Activated CD4-positive, alpha-beta T cell treated with anti-CD3 and anti-CD28 coated beads, Interleukin-2, amount 10 ng/mL, durations not matched to agents 24 days and 14 days (primary cell): ENCODE measurements at regions of chr2 and their contacts with region 1.

Region 1: DNA sequence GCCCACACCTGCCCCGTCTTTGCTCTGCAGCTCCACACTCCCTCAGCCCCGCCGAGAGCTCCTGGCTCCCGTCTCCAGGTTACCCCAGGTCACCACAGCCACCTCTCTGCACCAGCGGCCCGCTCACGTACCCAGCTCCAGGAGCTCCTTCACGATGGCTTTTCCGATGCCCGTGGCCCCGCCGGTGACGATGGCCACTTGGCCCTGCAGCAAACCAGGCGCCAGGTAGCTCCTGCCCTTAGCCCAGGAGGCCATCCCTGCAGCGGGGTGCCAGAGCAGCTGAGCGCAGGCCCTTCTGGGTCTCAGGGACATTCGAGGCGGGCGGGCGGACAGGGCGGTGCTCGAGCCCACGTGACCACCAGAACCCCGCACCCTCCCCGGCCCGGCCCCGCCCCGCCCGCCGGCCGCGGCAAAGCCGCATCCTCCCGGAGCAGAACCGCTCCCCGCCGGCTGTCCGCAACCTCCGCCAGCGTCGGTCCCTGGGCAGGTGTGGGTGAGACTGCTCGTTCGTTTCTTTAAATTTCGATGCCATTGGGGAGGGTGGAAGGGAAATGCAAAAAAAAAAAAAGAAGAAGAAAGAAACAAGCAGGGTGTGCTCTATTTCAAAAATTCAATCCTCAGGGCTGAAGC is at the starts of genes PECR and TMEM169:
- DNase-seq: peak; percentile 93
- H3K4me3 Mint-ChIP-seq: peak within 1 kb of the TSS; percentile 90
- H3K27ac Mint-ChIP-seq: peak within 1 kb of the TSS; percentile 78
- H3K4me1 Mint-ChIP-seq: peaks cover 52% of the 10 kb centered on the region
- H3K27me3 Mint-ChIP-seq: no peaks in the 10 kb centered on the region
- total RNA-seq, gene PECR: 13.1 and 15.3 TPM in 2 replicates
- total RNA-seq, gene TMEM169: 0.51 and 0.97 TPM in 2 replicates

Region 2: GRCh38 chr2:215311625-215312396 is 769.8 kb before region 1 on chr2 and contains the start of gene ATIC:
- intact Hi-C with region 1: loop called (anchors 10 kb)
- DNase-seq: peak; percentile 98
- H3K4me3 Mint-ChIP-seq: peak within 1 kb of the TSS; percentile 95
- H3K27ac Mint-ChIP-seq: peak within 1 kb of the TSS; percentile 95
- H3K4me1 Mint-ChIP-seq: peaks cover 31% of the 10 kb centered on the region
- H3K27me3 Mint-ChIP-seq: peaks cover 4% of the 10 kb centered on the region
- total RNA-seq, gene ATIC: 316 and 322 TPM in 2 replicates

Region 3: DNA sequence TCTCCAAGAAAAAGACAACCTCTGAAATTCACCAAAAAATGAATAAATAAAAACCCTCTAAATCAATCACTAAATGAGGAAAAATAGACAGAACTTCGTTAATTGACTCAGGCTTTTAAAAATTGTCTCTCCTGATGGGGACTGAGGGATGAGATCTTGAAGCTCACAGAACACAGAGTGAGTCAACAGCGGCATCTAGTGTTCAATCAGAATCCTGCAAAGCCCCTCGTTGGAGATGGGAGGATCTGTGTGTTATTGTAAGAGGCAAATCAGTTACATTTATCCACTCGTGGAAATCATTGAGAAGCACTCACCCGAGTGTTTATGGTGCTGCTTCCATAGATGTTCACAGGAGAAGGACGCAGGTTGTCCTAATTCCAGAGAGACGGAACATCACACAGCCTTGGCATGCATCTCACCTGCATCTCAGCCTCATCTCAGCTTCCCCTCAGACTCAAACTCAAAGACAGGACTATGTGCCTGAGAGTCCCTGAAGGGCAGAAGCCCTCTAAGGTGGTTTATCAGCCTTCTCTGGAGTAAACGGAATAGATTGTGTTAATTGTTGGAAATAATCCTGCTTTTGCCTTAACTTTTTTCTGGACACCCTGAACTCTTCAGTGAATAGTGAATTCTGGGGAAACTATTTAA is 150.2 kb before region 1 on chr2:
- intact Hi-C with region 1: no loop called
- DNase-seq: peak; percentile 86
- H3K4me3 Mint-ChIP-seq: no peak overlapping the region
- H3K27ac Mint-ChIP-seq: no peak overlapping the region
- H3K4me1 Mint-ChIP-seq: peaks cover 6% of the 10 kb centered on the region
- H3K27me3 Mint-ChIP-seq: peaks cover 2% of the 10 kb centered on the region

Region 4: GRCh38 chr2:216013080-216013909 is 68.3 kb before region 1 on chr2 and contains the start of gene MREG:
- intact Hi-C with region 1: no loop called
- DNase-seq: peak; percentile 95
- H3K4me3 Mint-ChIP-seq: peak within 1 kb of the TSS; percentile 90
- H3K27ac Mint-ChIP-seq: peak within 1 kb of the TSS; percentile 71
- H3K4me1 Mint-ChIP-seq: peaks cover 47% of the 10 kb centered on the region
- H3K27me3 Mint-ChIP-seq: peaks cover 3% of the 10 kb centered on the region
- total RNA-seq, gene MREG: 10.6 and 10.9 TPM in 2 replicates

Region 5: GRCh38 chr2:216057688-216058193 is 23.9 kb before region 1 on chr2:
- intact Hi-C with region 1: loop called (anchors 2 kb)
- DNase-seq: peak; percentile 90
- H3K4me3 Mint-ChIP-seq: peak overlapping the region; percentile 81
- H3K27ac Mint-ChIP-seq: peak overlapping the region; percentile 92
- H3K4me1 Mint-ChIP-seq: peaks cover 32% of the 10 kb centered on the region
- H3K27me3 Mint-ChIP-seq: no peaks in the 10 kb centered on the region

Region 6: GRCh38 chr2:216071111-216071851 is 10.3 kb before region 1 on chr2:
- intact Hi-C with region 1: loop called (anchors 1 kb)
- DNase-seq: no peak
- H3K4me3 Mint-ChIP-seq: no peak overlapping the region
- H3K27ac Mint-ChIP-seq: no peak overlapping the region
- H3K4me1 Mint-ChIP-seq: peaks cover 26% of the 10 kb centered on the region
- H3K27me3 Mint-ChIP-seq: no peaks in the 10 kb centered on the region

Region 7: DNA sequence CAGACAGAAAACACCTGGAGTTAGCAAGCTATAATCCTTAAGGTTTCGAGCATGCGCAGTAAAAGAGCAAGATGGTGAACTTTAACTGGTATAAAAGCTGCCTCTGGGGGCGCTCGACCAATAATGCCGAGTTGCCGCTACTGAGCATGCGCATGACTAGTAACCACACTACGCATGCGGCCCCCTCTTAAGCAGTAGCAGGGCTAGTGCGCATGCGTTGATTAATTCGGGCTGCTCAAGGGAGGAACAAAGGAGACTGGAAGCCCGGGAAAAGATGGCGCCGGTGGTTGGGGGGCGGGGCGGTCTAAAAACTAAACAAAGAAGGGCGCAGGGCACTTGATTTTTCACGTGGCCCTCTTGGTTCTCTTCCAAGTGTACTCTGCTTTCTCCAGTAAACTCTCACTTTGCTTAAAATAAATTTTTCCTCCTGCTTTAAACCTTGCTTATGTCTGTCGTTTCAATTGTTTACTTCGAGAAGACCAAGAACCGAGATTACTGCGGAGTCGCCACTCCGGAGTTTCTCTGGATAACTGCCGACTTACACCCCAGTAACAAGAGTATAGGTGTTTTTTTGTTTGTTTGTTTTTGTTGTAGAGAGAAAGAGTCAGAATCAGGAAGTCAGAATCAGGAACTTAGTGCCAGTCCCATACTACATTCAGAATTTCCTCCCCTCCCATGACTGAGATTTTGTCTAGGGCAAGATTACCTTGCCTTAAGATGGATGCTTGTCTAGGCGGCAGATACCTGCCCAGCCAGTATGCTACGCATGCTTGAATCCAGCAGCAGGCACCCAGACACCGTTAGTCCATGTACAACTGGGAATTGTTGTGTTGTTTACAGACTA is 33.3 kb after region 1 on chr2:
- intact Hi-C with region 1: loop called (anchors 1 kb)
- DNase-seq: peak; percentile 99
- H3K4me3 Mint-ChIP-seq: peak overlapping the region; percentile 91
- H3K27ac Mint-ChIP-seq: peak overlapping the region; percentile 92
- H3K4me1 Mint-ChIP-seq: peaks cover 79% of the 10 kb centered on the region
- H3K27me3 Mint-ChIP-seq: peaks cover 2% of the 10 kb centered on the region

Region 8: DNA sequence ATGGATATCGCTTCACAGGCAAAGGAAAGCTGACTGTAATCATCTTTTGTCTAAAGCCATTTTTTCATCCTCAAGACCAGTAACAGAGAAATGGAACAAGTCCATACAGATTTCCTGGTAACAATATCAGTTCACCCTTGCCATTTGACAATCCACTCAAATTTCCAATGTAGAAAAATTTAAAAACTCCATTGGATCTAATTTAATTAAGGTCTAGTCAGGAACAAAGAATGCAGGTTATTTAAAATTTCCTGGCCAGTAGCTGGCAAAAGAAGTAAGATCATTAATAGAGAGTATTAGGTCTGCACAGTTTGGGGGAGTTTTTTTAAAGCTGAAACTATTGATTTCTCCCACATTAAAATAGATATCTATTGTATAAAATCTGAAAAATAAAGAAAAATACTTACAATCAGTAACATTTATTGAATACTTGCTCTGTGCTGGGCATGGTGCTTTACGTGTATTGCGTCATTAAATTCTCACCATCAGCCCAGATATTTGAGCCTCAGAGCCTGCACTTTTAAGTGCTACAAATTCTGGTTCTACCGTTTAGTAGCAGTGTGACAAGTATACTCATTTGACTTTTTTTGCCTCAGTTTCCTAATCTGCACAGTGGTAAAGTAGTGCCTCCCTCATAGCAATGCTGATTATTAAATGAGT is 372.5 kb after region 1 on chr2:
- intact Hi-C with region 1: no loop called
- DNase-seq: no peak
- H3K4me3 Mint-ChIP-seq: no peak overlapping the region
- H3K27ac Mint-ChIP-seq: no peak overlapping the region
- H3K4me1 Mint-ChIP-seq: no peaks in the 10 kb centered on the region
- H3K27me3 Mint-ChIP-seq: no peaks in the 10 kb centered on the region